ENCODE measurements at regions of chr1 and their contacts with region 1.

Region 1: DNA sequence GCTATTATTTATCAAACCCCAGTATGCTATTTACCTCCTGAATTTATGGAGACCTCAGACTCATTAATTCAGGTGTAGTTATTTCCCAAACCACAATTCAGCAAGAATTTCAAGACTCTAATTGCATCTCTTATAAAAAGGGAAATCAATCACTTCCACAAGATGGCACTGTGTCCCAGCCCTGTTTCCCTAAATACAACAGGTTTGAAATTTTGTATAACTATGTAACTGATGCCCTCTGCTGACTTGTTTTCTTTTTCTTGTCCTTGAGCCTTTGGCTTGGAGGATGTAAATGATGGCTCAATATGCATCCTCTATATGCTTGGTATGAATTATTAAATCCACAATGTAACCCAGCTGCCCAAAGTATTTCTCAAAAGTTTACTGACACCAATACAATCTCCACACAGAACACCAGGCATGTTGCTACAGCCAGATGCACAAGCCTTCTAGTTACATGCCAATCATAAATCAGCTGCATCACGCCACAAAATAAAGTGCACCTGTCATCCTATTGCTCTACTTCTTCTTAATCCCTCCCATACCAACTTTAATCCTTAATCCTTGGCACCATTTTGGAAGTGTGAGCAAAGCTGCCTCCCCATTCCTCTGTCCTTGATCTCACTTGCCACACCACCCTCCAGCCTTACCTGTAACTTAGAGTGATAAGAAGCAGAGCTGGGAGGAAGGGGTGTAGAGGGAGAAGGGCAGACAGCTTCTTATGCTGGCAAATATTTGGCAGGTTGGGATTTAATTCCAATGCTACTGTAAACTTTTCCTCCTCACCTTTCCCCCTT is 9.0 kb downstream of the C1orf105 start:
- DNase-seq: peak; percentile 77
- H3K4me3 Mint-ChIP-seq: no peak overlapping the region
- H3K27ac Mint-ChIP-seq: no peak overlapping the region
- H3K4me1 Mint-ChIP-seq: peaks cover 46% of the 10 kb centered on the region
- H3K27me3 Mint-ChIP-seq: no peaks in the 10 kb centered on the region

Region 2: DNA sequence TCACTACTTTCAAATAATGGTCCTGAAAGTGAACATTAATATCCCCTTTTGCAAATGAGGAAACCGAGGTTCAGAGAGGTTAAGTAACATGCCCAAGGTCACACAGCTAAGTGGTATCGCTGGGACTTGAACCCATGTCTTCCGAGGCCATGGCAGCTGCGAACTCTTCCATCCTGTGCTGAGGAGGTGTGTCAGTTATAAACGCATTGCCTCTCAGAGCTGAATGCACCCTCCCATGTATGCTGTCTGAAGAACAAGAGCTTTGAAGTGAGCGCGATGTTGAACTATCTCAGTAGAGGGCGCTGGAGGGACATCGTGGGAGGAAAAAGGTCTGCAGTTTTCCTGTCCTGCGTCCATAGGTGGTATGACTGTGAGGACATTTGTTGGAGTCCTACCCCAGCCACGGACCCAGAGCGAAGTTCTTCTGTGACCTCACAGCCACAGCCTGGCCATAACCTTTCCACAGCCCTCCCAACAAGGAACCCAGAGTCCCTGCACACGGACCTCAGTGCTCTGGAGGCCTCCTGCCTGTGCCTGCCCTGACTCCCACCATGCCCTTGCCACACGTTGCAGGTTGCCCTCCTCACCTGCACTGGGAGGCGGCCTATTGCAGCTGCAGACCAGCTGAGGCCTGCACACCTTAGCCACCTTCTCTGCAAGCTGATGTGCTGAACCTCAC is 784.6 kb before region 1 on chr1:
- CTCF ChIA-PET with region 1: no interaction called
- intact Hi-C with region 1: loop called (anchors 5 kb)
- DNase-seq: peak; percentile 87
- H3K4me3 Mint-ChIP-seq: no peak overlapping the region
- H3K27ac Mint-ChIP-seq: no peak overlapping the region
- H3K4me1 Mint-ChIP-seq: peaks cover 4% of the 10 kb centered on the region
- H3K27me3 Mint-ChIP-seq: no peaks in the 10 kb centered on the region

Region 3: DNA sequence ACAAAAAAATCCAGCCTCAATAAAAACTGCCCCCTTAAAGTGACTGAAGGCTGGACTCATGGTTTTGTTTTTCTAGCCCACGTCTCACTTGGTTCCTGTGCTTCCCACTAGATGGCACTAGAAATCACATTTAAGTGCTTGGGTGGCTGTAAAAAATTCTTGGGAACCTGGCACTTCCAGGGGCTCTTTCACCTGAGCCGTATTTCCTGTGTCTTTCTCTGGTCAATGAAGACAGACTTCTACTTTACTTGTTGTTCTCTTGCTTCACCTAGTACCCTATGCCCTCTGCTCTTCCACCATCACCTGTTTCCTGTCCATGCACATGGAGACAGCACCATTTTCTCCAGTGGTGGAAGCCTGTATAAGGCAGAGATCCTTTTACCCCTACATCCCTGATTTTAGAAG is 628.0 kb before region 1 on chr1:
- CTCF ChIA-PET with region 1: no interaction called
- intact Hi-C with region 1: loop called (anchors 5 kb)
- DNase-seq: no peak
- H3K4me3 Mint-ChIP-seq: no peak overlapping the region
- H3K27ac Mint-ChIP-seq: no peak overlapping the region
- H3K4me1 Mint-ChIP-seq: peaks cover 3% of the 10 kb centered on the region
- H3K27me3 Mint-ChIP-seq: no peaks in the 10 kb centered on the region

Region 4: GRCh38 chr1:172089768-172090510 is 339.6 kb before region 1 on chr1:
- CTCF ChIA-PET with region 1: interaction called, 4 read pairs
- intact Hi-C with region 1: loop called (anchors 1 kb)
- DNase-seq: peak; percentile 83
- H3K4me3 Mint-ChIP-seq: no peak overlapping the region
- H3K27ac Mint-ChIP-seq: no peak overlapping the region
- H3K4me1 Mint-ChIP-seq: peaks cover 2% of the 10 kb centered on the region
- H3K27me3 Mint-ChIP-seq: no peaks in the 10 kb centered on the region

Region 5: GRCh38 chr1:172411791-172412338 is 17.7 kb before region 1 on chr1:
- CTCF ChIA-PET with region 1: interaction called, 15 read pairs
- intact Hi-C with region 1: no loop called
- DNase-seq: no peak
- H3K4me3 Mint-ChIP-seq: no peak overlapping the region
- H3K27ac Mint-ChIP-seq: no peak overlapping the region
- H3K4me1 Mint-ChIP-seq: peaks cover 11% of the 10 kb centered on the region
- H3K27me3 Mint-ChIP-seq: no peaks in the 10 kb centered on the region

Region 6: GRCh38 chr1:172449585-172450534 is 20.3 kb after region 1 on chr1:
- CTCF ChIA-PET with region 1: interaction called, 88 read pairs
- intact Hi-C with region 1: no loop called
- DNase-seq: peak; percentile 53
- H3K4me3 Mint-ChIP-seq: peak overlapping the region; percentile 7
- H3K27ac Mint-ChIP-seq: peak overlapping the region; percentile 26
- H3K4me1 Mint-ChIP-seq: peaks cover 31% of the 10 kb centered on the region
- H3K27me3 Mint-ChIP-seq: no peaks in the 10 kb centered on the region

Region 7: GRCh38 chr1:172719694-172720138 is 290.2 kb after region 1 on chr1:
- CTCF ChIA-PET with region 1: interaction called, 6 read pairs
- intact Hi-C with region 1: loop called (anchors 2 kb)
- DNase-seq: no peak
- H3K4me3 Mint-ChIP-seq: no peak overlapping the region
- H3K27ac Mint-ChIP-seq: no peak overlapping the region
- H3K4me1 Mint-ChIP-seq: peaks cover 33% of the 10 kb centered on the region
- H3K27me3 Mint-ChIP-seq: peaks cover 3% of the 10 kb centered on the region